ENCODE measurements at regions of chr6 and their contacts with region 1.

Region 1: DNA sequence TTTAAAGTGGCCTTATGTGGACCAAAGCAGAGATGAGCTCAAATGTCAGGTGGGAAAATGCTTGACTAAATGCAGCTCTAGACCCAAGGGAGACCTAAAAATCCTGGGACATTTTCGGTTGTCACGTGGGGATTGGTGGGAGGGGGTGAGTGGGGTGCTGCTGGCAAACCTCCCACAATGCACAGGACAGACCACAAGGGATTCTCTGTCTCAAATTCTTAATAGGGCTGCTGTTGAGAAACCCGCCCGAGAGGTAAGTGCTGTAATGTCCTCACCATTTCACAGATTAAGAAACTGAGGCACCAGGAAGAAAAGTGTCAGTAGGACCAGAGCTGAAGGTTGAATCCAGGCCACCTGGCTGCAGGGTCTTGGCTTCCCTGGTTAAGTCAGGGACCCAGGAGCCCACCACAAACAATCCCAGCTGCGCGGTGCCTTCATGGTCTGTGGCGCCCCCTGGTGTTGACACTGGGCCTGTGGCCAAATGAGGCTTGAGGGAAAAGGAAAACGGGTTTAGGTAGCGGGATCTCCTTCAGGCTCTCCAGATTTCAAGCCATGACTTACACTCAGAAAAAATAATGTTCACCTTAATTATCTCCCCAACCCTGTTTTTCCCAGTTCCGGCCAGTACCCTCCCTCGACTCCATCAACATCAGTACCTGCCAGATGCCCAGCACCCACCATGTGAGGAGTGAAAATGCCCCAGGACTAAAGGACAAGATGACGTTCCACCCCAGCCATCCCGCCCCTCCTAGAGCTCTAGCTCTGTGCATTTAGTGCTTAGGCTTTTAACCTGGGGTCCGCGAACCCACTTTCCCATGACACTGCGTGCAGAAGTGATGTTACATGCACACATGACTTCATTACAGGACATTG is 7.2 kb downstream of the HLA-G start:
- DNase-seq: peak; percentile 69
- ATAC-seq: no peak
- H3K4me3 ChIP-seq: no peak overlapping the region
- H3K4me3 Mint-ChIP-seq: no peak overlapping the region
- H3K27ac ChIP-seq: no peak overlapping the region
- H3K27ac Mint-ChIP-seq: no peak overlapping the region
- H3K4me1 ChIP-seq: no peaks in the 10 kb centered on the region
- H3K4me1 Mint-ChIP-seq: no peaks in the 10 kb centered on the region
- H3K27me3 ChIP-seq: peaks cover 0 to 43% (median 19%) of the 10 kb centered on the region in 4 experiments
- H3K27me3 Mint-ChIP-seq: peaks cover 74% of the 10 kb centered on the region
- CTCF ChIP-seq: peak; percentile 89

Region 2: DNA sequence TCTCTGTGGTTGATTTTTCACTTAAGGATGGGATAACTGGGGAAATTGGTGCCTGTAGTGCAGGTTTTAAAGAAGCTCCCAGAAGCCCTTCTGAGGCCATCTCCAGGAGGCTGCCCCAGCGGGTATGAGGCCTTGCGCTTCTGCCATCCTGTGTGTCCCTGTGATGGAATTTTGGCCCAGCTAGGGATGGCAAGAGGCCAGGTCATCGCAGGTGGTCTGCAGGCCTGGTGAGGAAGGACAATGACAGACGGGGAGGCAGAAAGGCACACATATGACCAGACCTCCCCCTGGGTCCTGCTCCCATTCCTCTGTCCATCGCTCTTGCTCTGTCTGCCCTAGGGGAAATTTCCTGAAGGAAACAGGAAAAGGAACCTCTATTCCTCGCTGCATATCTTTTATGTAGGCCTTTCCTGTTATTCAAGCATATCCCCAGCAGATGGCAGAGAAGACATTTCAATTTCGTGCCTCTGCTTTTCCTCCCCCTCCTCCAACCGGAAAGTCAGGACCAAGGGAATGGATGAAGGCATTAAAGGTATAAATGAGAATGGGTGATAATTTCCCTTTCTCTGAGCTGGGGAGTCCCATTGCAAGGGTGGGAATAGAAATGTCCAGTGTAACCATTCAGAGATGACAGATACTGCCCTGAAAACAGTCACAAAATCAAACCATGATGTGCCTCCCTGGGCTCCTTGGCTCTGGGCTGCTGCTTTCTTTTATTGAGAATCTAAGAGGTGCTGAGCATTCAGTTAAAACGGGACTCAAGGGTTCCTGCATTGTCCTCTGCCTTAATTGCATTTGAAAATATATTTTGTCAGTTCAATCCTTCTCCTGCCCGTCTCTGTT is 129.2 kb before region 1 on chr6:
- CTCF ChIA-PET with region 1: interaction called, 23 read pairs
- POLR2A ChIA-PET with region 1: no interaction called
- intact Hi-C with region 1: loop called (anchors 1 kb)
- DNase-seq: peak; percentile 64
- ATAC-seq: no peak
- H3K4me3 ChIP-seq: no peak overlapping the region
- H3K4me3 Mint-ChIP-seq: no peak overlapping the region
- H3K27ac ChIP-seq: no peak overlapping the region
- H3K27ac Mint-ChIP-seq: no peak overlapping the region
- H3K4me1 ChIP-seq: peaks cover 18 to 39% of the 10 kb centered on the region in 2 donors
- H3K4me1 Mint-ChIP-seq: peaks cover 21% of the 10 kb centered on the region
- H3K27me3 ChIP-seq: peaks cover 0 to 17% (median 7%) of the 10 kb centered on the region in 4 experiments
- H3K27me3 Mint-ChIP-seq: peaks cover 35% of the 10 kb centered on the region
- CTCF ChIP-seq: peak; percentile 72

Region 3: GRCh38 chr6:29769336-29769735 is 65.5 kb before region 1 on chr6:
- CTCF ChIA-PET with region 1: no interaction called
- POLR2A ChIA-PET with region 1: no interaction called
- intact Hi-C with region 1: no loop called
- DNase-seq: no peak
- ATAC-seq: no peak
- H3K4me3 ChIP-seq: no peak overlapping the region
- H3K4me3 Mint-ChIP-seq: no peak overlapping the region
- H3K27ac ChIP-seq: no peak overlapping the region
- H3K27ac Mint-ChIP-seq: no peak overlapping the region
- H3K4me1 ChIP-seq: no peaks in the 10 kb centered on the region
- H3K4me1 Mint-ChIP-seq: no peaks in the 10 kb centered on the region
- H3K27me3 ChIP-seq: peaks cover 0 to 7% (median 2%) of the 10 kb centered on the region in 4 experiments
- H3K27me3 Mint-ChIP-seq: peaks cover 39% of the 10 kb centered on the region
- CTCF ChIP-seq: no peak

Region 4: GRCh38 chr6:29809249-29809648 is 25.6 kb before region 1 on chr6:
- CTCF ChIA-PET with region 1: interaction called, 11 read pairs
- POLR2A ChIA-PET with region 1: no interaction called
- intact Hi-C with region 1: no loop called
- DNase-seq: no peak
- ATAC-seq: no peak
- H3K4me3 ChIP-seq: no peak overlapping the region
- H3K4me3 Mint-ChIP-seq: no peak overlapping the region
- H3K27ac ChIP-seq: no peak overlapping the region
- H3K27ac Mint-ChIP-seq: no peak overlapping the region
- H3K4me1 ChIP-seq: no peaks in the 10 kb centered on the region
- H3K4me1 Mint-ChIP-seq: no peaks in the 10 kb centered on the region
- H3K27me3 ChIP-seq: peaks cover 0 to 20% (median 7%) of the 10 kb centered on the region in 4 experiments
- H3K27me3 Mint-ChIP-seq: peaks cover 29% of the 10 kb centered on the region
- CTCF ChIP-seq: no peak

Region 5: DNA sequence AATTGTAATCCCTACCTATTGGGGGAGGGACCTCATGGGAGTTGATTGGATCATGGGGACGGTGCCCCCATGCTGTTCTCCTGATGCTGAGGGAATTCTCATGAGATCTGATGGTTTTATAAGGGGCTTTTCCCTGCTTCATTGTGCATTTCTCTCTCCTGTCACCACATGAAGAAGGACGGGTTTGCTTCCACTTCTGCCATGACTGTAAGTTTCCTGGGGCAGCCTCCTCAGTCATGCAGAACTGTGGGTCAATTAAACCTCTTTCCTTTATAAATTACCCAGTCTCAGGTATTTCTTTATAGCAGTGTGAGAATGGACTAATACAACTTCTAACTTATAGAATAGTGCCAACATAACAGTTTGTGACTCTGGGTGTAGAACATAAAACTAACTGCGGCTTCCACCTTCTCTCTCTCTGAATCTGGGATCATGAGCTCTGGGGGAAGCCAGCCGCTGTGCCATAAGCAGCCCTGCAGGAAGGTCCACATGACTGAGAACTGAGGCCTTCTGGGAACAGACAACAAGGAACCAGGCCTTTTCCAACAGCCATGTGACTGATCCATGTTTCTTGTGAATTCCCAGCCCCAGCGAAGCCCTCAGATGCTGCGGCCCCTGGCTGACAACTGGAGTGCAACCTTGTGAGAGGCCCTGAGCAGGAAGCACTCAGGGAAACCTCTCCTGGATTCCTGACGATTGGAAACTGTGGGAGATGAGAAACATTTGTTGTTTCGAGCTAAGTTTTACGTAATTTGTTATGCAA is 104.1 kb after region 1 on chr6:
- CTCF ChIA-PET with region 1: no interaction called
- POLR2A ChIA-PET with region 1: no interaction called
- intact Hi-C with region 1: no loop called
- DNase-seq: no peak
- ATAC-seq: no peak
- H3K4me3 ChIP-seq: no peak overlapping the region
- H3K4me3 Mint-ChIP-seq: peak overlapping the region; percentile 5
- H3K27ac ChIP-seq: no peak overlapping the region
- H3K27ac Mint-ChIP-seq: peak overlapping the region; percentile 62
- H3K4me1 ChIP-seq: peaks cover 15 to 18% of the 10 kb centered on the region in 2 donors
- H3K4me1 Mint-ChIP-seq: peaks cover 31% of the 10 kb centered on the region
- H3K27me3 ChIP-seq: no peaks in the 10 kb centered on the region
- H3K27me3 Mint-ChIP-seq: no peaks in the 10 kb centered on the region
- CTCF ChIP-seq: no peak

Measured in B cell (primary cell).